ENCODE measurements at regions of chr6 and their contacts with region 1.

Region 1: DNA sequence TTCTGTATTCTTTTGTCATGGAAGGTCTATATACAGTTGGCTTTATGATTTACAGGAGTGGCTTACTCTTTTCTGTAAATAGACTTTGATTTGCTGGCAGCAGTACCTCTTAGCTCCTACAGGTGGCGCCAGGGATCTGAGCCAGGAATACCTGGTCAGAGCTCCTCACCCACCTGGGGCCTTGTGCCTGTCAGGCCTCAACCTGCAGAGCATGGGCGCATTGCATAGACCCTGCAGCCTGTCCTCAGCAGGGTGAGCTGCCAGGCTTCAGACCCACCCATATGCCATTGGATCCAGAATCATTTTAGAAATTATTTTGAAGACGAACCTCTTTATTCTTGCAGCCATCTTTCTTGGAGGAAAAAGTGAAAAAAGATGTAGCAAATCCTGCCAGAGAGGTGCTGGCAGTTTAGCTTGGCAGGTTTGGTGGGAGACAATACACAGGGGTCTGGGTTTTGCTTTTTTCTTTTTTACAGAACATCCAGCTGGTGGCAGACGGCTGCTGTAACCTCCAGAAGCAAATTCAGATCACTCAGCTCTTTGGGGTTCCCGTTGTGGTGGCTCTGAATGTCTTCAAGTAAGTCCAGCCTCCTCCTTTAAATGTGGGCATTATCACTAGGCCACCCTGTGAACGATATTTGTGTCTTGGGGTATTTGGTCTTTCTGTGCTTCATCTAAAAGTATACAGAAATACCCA is 149.1 kb downstream of the MTHFD1L start:
- DNase-seq: peak; percentile 76 to 93
- H3K4me3 ChIP-seq: peak overlapping the region in 1 of 4 donors; percentile 6
- H3K27ac ChIP-seq: peak overlapping the region in 1 of 5 donors; percentile 52
- H3K4me1 ChIP-seq: peaks cover 0 to 13% (median 6%) of the 10 kb centered on the region in 4 donors
- H3K27me3 ChIP-seq: no peaks in the 10 kb centered on the region
- CTCF ChIP-seq: peak in 6 of 7 experiments; percentile 66 to 99 (median 98)
- EP300 ChIP-seq: no peak
- POLR2A ChIP-seq: no peak

Region 2: DNA sequence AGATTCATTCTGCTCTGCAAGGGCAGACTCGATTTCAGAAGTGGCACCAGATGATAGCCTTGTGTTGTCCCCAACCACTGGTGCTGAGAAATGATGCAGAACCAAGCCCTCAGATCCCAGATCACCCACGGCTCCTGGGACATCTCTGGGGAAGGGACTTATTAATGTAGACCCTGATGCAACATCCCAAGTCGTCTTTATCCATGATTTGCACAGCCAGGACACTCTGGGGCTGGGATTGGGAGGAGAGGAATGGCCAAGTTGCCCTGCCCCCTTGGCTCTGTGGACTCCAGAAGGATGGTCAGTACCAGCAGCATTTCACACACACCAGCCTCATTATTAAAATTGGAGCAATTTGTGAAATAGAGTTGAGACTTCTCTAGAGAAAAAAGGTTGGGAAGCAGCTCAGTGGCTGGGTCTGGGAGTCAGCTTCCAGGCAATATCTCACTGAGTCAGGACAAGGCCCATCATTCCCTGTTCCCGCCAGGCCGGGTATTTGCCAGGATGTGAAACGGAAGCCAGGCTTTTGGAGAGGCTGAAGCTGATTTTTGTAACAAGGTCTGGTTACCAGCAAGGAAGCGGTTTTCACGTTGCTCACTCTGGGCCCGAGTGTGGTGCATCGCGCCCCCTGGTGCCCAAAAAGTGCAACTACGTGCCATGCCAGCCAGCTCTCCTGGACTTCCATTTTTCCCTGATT is 309.4 kb after region 1 on chr6:
- intact Hi-C with region 1: loop called (anchors 5 kb)
- DNase-seq: peak; percentile 80 to 95
- H3K4me3 ChIP-seq: no peak overlapping the region
- H3K27ac ChIP-seq: peak overlapping the region in 4 of 5 donors; percentile 64 to 91 (median 67)
- H3K4me1 ChIP-seq: peaks cover 20 to 39% (median 25%) of the 10 kb centered on the region in 4 donors
- H3K27me3 ChIP-seq: peaks cover 0 to 7% (median 0%) of the 10 kb centered on the region in 3 donors
- CTCF ChIP-seq: peak in 6 of 7 experiments; percentile 58 to 98 (median 98)
- EP300 ChIP-seq: peak; percentile 45
- POLR2A ChIP-seq: no peak